Ascending aorta (tissue), 2 donors: ENCODE measurements at regions of chr2 and their contacts with region 1.

Region 1: GRCh38 chr2:33366473-33366872 is 110.0 kb upstream of the RASGRP3 start:
- DNase-seq: peak in 1 of 2 donors; percentile 85
- H3K4me3 ChIP-seq: no peak overlapping the region
- H3K27ac ChIP-seq: peak overlapping the region; percentile 67 to 77
- H3K4me1 ChIP-seq: peaks cover 9 to 34% of the 10 kb centered on the region in 2 donors
- H3K27me3 ChIP-seq: no peaks in the 10 kb centered on the region
- CTCF ChIP-seq: no peak

Region 2: GRCh38 chr2:32715391-32715841 is 651.1 kb before region 1 on chr2:
- intact Hi-C with region 1: loop called (anchors 5 kb)
- DNase-seq: no peak
- H3K4me3 ChIP-seq: no peak overlapping the region
- H3K27ac ChIP-seq: peak overlapping the region; percentile 72 to 80
- H3K4me1 ChIP-seq: peaks cover 14 to 38% of the 10 kb centered on the region in 2 donors
- H3K27me3 ChIP-seq: no peaks in the 10 kb centered on the region
- CTCF ChIP-seq: no peak

Region 3: DNA sequence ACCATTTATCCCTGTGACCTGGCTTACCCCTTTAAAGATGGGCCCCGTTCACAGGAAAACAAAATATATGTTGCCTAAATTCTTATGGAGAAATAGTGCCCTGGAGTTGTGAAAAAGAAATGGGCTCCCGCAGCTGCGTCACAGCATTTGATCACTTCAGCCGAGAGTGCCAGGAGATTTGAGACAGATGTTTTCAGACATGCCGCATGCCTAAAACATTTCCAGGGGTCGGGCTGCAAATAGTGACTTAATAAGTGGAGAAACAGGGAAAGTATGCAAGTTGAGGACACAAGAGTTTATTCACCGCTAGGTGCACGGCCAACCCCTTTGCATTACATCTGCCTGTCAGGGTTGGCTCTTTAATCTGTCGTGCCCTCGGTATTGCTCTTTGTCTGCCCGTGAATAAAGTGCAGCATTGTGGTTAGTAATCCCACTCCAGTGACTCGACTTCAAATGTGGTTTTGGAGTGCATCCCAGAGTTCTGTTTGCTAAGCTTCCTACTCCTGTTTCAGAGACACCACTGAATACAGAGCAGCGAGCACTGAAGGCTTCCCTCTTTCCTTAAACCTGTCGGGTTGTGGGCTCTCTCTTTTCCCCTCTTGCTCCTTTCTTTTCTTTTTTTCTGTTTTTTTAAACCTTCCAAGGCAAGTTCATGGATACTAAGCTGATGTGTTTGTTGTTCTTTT is 232.2 kb before region 1 on chr2:
- intact Hi-C with region 1: loop called (anchors 10 kb)
- DNase-seq: peak in 1 of 2 donors; percentile 93
- H3K4me3 ChIP-seq: peak overlapping the region; percentile 62 to 73
- H3K27ac ChIP-seq: peak overlapping the region; percentile 88 to 92
- H3K4me1 ChIP-seq: peaks cover 6 to 38% of the 10 kb centered on the region in 2 donors
- H3K27me3 ChIP-seq: no peaks in the 10 kb centered on the region
- CTCF ChIP-seq: peak in 1 of 3 experiments; percentile 17

Region 4: DNA sequence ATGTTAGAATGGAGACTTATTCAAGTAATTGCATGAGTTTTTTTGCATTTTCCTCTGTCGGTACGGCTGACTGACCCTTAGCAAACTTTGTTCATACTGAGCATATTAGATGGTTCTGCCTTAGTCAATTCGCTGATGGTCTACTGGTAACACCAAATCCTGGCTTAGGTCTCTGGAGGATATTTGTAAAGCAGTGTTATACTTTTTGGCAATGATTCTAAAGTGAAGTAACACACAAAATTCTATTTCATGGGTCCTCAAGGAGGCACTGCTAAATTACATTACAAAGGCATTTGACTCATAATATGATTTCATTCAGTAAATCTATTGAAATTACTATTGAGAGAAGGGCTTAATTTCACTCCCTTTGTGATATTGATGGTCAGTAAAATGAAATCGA is 136.8 kb before region 1 on chr2:
- intact Hi-C with region 1: loop called (anchors 5 kb)
- DNase-seq: no peak
- H3K4me3 ChIP-seq: no peak overlapping the region
- H3K27ac ChIP-seq: peak overlapping the region; percentile 70 to 76
- H3K4me1 ChIP-seq: peaks cover 0 to 37% of the 10 kb centered on the region in 2 donors
- H3K27me3 ChIP-seq: no peaks in the 10 kb centered on the region
- CTCF ChIP-seq: no peak

Region 5: DNA sequence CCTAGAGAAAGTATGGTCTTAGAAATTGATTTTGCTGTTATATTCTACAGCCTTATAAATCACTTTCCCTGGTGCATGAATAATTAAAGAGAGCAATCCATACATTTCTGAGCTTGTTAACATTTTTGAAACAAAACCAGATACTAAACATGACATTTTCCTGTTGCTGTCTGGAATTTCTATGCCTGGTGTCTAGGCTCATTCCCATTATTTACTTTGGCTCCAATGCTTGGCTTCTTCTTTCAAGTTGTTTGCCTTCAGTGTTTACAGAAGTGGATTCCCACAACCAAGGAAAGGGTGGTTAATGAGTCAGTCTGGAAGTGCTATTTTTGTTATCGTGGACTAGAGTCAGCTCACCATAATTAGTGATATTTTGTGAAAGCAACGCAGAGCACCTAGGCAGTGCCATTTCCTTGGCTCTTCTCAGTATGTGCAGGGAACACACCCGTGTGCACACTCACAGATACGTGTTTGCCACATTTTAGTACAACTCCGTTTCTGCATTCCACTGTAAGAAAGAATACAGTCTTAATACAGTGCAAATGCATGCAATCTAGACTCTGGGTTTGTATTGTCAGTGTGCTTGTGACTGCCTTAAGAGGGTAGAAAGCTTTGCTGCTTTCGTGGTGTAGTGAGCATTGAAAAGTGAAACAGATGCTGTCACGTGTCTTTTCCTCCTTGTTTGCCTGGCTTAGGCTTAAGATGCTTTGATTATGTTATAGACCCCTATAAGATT is 75.0 kb before region 1 on chr2:
- intact Hi-C with region 1: loop called (anchors 5 kb)
- DNase-seq: no peak
- H3K4me3 ChIP-seq: peak overlapping the region in 1 of 2 donors; percentile 39
- H3K27ac ChIP-seq: peak overlapping the region; percentile 86 to 88
- H3K4me1 ChIP-seq: peaks cover 28 to 40% of the 10 kb centered on the region in 2 donors
- H3K27me3 ChIP-seq: no peaks in the 10 kb centered on the region
- CTCF ChIP-seq: no peak